Activated naive CD4-positive, alpha-beta T cell treated with anti-CD3 and anti-CD28 coated beads for 36 hours (primary cell): ENCODE measurements at regions of chr1 and their contacts with region 1.

Region 1: GRCh38 chr1:156591432-156592157 is at the start of gene NAXE:
- DNase-seq: peak; percentile 71
- H3K4me3 Mint-ChIP-seq: peak within 1 kb of the TSS; percentile 83
- H3K27ac Mint-ChIP-seq: peak within 1 kb of the TSS; percentile 88
- H3K4me1 Mint-ChIP-seq: peaks cover 28% of the 10 kb centered on the region
- H3K27me3 Mint-ChIP-seq: no peaks in the 10 kb centered on the region
- total RNA-seq, gene NAXE: 77.4 to 84.6 TPM

Region 2: DNA sequence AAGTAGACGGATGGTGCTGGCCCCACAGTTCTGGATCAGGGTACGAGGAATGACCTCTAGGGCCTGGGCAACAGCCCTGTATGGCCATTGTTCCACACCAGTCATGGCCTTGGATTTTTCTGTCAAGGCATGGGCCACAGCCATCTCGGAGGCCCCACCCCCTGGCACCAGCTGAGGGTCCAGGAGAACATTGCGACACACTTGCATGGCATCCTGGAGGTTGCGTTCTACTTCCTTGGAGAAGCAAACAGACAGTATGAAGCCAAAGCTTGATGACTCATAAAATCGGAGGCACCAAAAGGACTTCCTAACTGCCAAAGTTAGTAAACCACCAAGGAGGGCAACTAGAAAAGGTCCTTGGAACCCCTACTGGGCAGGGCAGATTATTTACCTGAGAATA is 280.6 kb before region 1 on chr1:
- CTCF ChIA-PET with region 1: no interaction called
- intact Hi-C with region 1: no loop called
- DNase-seq: no peak
- H3K4me3 Mint-ChIP-seq: no peak overlapping the region
- H3K27ac Mint-ChIP-seq: no peak overlapping the region
- H3K4me1 Mint-ChIP-seq: no peaks in the 10 kb centered on the region
- H3K27me3 Mint-ChIP-seq: no peaks in the 10 kb centered on the region

Region 3: DNA sequence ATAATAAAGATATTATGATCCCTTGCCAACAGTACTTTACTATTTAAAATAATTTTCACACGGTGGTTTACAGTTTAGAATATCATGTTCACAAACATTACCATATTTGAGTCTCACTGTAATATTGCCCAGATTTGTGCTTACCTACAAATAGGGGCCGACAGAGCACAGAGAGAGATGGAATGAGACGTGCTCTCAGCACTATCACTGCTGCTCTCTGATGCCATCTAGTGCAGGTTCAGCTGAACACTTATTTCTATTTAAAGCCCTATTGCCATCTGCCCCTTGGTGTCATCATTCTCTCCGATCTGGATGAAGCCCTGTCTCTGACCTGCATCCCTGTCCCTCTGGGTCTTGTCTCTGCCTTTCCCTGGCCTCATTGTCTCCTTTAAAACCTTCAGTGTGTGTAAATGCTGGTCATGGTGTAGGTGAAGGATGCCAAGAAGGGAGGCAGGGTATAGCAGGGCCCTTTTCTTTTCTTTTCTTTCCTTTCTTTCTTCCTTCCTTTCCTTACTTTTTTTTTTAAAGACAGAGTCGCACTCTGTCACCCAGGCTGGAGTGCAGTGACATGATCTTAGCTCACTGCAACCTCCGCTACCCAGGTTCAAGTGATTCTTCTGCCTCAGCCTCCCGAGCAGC is 16.6 kb after region 1 on chr1:
- CTCF ChIA-PET with region 1: interaction called, 21 read pairs
- intact Hi-C with region 1: no loop called
- DNase-seq: peak; percentile 85
- H3K4me3 Mint-ChIP-seq: no peak overlapping the region
- H3K27ac Mint-ChIP-seq: no peak overlapping the region
- H3K4me1 Mint-ChIP-seq: peaks cover 10% of the 10 kb centered on the region
- H3K27me3 Mint-ChIP-seq: peaks cover 2% of the 10 kb centered on the region

Region 4: GRCh38 chr1:156632350-156632749 is 40.8 kb after region 1 on chr1:
- CTCF ChIA-PET with region 1: no interaction called
- intact Hi-C with region 1: no loop called
- DNase-seq: no peak
- H3K4me3 Mint-ChIP-seq: no peak overlapping the region
- H3K27ac Mint-ChIP-seq: no peak overlapping the region
- H3K4me1 Mint-ChIP-seq: no peaks in the 10 kb centered on the region
- H3K27me3 Mint-ChIP-seq: peaks cover 39% of the 10 kb centered on the region

Region 5: DNA sequence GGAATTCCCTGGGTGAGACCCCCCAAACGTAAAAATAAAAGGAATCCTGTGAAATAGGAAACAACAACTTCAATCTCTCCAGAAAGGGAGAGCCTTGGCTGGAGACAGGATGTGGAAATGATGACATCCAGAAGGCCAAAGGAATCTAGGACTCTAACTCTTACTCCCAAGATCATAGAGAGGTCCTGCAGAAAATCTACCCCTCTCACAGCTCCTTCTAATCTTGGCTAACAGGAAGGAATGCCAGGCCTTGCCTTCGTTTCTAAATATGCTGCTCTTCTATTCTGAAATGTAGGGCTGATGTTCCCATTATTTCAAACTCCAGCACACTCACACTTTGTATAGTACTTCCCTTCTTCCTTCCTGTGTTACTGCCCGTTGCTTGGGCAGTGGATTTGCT is 413.2 kb after region 1 on chr1:
- CTCF ChIA-PET with region 1: no interaction called
- intact Hi-C with region 1: no loop called
- DNase-seq: no peak
- H3K4me3 Mint-ChIP-seq: no peak overlapping the region
- H3K27ac Mint-ChIP-seq: no peak overlapping the region
- H3K4me1 Mint-ChIP-seq: no peaks in the 10 kb centered on the region
- H3K27me3 Mint-ChIP-seq: peaks cover 11% of the 10 kb centered on the region